AG04449 (cell line): ENCODE measurements at regions of chr1 and their contacts with region 1.

Region 1: DNA sequence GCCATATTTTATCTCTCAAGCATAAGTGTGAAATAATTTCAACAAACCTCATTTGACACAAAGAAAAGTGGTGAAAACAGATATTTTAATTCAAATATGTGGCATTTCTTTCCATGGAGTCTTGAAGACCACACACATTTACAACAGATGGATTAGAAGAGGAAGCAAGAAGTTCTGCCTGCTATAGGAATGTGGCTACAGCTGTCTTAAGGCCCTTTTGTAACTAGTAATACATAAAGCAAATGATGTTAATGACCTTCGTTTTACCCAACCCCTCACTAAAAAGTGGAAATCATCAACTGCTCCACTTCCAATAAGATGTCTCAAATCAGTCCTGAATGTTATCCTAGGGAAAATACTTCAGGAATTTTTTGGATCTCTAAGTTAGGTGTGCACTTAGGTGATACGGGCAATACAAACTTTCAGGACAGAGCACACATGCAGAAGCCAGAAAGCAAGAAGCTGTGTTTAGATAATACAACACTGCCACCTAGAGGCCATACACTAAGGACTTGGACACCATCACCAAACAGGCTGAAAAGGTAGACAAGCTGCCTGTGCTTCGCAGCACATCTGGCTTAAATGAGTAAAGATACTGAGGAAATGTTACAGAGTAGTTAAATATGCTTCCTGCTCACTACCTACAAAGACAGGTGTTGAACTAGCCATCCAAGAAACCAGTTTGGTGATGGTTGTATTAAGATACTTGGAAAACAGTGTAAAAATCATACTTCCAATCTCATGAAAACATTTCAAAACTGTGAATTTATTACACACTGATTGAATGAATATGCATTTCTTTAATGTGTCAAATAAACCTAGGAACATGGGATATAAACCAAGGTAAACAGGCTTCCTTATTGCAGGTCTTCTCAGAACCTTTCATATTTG is 24.4 kb downstream of the RRAGC start:
- DNase-seq: peak; percentile 47
- H3K4me3 ChIP-seq: no peak overlapping the region
- CTCF ChIP-seq: peak; percentile 69

Region 2: DNA sequence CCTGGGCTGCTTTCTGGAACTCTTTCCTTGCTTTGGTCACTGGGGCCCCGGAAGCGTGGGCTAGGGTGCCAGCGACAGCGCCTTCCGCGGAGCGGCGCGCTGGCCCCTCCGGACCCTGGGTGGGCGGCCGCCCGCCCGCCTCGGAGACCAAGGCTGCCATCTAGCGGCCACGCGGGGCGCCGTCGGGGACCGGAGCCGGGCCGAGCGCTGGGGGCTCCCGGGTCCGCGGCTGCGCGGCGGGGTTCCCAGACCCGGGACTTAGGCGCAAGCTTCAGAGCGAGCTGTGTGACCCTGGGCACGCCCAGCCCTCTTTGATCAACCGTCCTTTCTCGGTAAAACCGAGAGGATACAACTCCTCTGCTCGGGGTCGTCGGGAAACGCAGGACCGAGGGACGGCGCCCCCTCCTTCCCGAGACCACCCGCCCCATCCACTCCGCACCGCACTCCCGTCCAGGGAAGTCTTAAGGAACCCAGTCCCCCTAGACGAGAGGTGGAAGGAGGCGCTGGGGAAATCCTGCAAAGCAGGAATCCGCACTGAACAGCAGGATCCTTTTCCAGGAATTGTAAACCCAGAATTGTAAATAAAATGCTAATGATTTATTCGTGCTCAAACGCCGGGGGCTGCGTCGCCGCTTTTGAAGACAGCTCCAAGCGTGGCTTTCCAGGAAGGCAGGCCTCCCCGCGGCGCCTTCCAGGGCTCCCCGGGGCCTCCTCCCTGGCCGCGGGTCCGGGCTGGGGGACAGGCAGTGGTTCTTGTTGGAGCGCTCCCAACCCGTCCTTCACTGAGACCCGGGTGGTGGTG is 16.8 kb before region 1 on chr1:
- CTCF ChIA-PET with region 1: interaction called, 11 read pairs
- POLR2A ChIA-PET with region 1: no interaction called
- DNase-seq: no peak
- H3K4me3 ChIP-seq: peak overlapping the region; percentile 33
- CTCF ChIP-seq: peak; percentile 72

Region 3: GRCh38 chr1:38891753-38892152 is 56.6 kb after region 1 on chr1:
- CTCF ChIA-PET with region 1: no interaction called
- POLR2A ChIA-PET with region 1: no interaction called
- DNase-seq: no peak
- H3K4me3 ChIP-seq: no peak overlapping the region
- CTCF ChIP-seq: no peak